Activated CD4-positive, alpha-beta memory T cell treated with anti-CD3 and anti-CD28 coated beads for 36 hours (primary cell): ENCODE measurements at regions of chr11 and their contacts with region 1.

Region 1: DNA sequence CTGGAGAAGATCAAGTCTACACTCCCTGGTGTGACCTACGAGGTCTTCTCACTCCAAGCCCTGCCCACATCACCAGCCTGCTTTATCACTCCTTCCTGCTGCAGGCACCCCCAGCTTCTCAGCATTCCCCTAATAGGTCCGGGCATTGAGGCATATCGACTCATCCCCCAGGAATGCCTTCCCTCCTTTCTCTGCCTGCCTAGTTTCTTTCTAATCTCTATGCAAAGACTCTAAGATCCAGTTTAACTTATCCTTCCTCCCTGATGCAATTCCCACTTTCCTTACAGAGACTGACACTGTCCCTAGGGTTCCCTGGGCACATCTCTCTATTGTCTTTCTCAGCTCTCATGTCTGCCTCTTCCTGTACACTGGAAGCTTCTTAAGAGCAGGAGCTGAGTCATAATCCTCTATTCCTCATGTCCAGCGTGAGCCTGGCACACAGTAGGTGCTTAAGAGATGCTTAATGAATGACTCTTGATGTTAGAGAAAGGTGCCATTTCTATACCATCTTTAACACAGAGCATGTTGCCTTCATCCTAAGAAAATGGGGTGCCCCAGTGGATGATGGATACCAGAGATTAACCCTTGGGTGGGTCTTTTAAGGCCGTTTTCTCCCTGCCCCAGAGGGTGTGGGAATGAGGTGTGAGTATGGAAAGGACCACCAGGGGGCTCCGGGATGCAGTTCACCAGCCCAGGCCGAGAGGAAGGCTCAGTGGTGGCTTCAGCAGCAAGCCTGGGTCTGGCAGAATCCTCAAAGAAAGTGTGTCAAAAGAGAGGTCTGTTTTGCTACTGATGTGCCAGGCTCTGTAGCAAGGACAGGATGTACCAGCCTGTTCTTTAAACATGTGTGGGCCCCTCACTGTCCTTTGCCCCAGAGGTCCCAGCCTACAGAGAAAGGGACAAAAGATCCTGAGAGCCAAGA is 34.7 kb downstream of the PARVA start:
- DNase-seq: peak; percentile 50
- H3K4me3 Mint-ChIP-seq: no peak overlapping the region
- H3K27ac Mint-ChIP-seq: no peak overlapping the region
- H3K4me1 Mint-ChIP-seq: no peaks in the 10 kb centered on the region
- H3K27me3 Mint-ChIP-seq: no peaks in the 10 kb centered on the region

Region 2: GRCh38 chr11:12618743-12619540 is 206.9 kb after region 1 on chr11:
- CTCF ChIA-PET with region 1: no interaction called
- POLR2A ChIA-PET with region 1: no interaction called
- intact Hi-C with region 1: no loop called
- DNase-seq: no peak
- H3K4me3 Mint-ChIP-seq: no peak overlapping the region
- H3K27ac Mint-ChIP-seq: no peak overlapping the region
- H3K4me1 Mint-ChIP-seq: no peaks in the 10 kb centered on the region
- H3K27me3 Mint-ChIP-seq: peaks cover 2% of the 10 kb centered on the region

Region 3: DNA sequence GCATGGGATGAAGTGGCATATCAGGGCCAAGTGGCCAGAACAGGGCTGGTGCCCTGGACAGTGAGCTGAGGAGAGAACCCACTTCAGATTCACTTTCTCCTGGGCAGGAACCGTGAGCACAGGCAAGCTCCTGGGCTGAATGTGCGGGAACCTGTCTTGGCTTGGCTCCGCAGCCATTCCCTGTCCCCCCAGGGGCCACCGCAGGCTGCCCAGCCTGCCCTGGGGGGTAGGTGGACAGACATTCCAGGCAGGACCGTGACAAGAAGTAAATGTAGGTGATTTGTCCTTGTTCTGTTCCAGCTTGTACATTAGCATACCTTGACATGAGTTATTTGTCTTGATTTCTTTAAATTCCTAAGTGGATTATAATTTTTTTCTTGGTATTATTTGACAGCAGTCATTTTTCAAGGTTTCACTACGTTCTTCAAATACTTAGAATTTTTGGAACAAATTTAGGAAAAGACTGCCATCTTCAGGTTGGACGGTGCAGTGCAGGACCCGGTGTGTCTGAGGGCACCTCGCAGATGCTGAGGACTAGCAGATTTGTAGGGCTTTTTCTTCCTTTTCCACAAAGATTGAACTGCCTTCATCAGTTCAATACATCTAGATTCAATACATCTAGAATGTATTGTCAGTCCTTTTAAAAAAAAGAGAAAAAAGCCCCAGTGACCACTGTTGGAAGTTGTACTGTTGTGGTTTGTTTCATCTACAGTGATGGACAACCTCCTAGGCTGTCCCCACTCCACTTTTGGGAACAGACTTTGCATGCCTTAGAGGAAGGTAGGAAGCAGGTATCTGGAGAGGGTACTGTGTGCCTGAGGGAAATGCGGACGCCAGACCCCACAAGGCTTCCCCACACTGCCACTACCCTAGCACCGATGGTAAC is 482.0 kb after region 1 on chr11:
- CTCF ChIA-PET with region 1: interaction called, 9 read pairs
- POLR2A ChIA-PET with region 1: no interaction called
- intact Hi-C with region 1: loop called (anchors 5 kb)
- DNase-seq: peak; percentile 66
- H3K4me3 Mint-ChIP-seq: no peak overlapping the region
- H3K27ac Mint-ChIP-seq: no peak overlapping the region
- H3K4me1 Mint-ChIP-seq: no peaks in the 10 kb centered on the region
- H3K27me3 Mint-ChIP-seq: peaks cover 1% of the 10 kb centered on the region